Naive thymus-derived CD8-positive, alpha-beta T cell (primary cell): ENCODE measurements at regions of chr1 and their contacts with region 1.

Region 1: DNA sequence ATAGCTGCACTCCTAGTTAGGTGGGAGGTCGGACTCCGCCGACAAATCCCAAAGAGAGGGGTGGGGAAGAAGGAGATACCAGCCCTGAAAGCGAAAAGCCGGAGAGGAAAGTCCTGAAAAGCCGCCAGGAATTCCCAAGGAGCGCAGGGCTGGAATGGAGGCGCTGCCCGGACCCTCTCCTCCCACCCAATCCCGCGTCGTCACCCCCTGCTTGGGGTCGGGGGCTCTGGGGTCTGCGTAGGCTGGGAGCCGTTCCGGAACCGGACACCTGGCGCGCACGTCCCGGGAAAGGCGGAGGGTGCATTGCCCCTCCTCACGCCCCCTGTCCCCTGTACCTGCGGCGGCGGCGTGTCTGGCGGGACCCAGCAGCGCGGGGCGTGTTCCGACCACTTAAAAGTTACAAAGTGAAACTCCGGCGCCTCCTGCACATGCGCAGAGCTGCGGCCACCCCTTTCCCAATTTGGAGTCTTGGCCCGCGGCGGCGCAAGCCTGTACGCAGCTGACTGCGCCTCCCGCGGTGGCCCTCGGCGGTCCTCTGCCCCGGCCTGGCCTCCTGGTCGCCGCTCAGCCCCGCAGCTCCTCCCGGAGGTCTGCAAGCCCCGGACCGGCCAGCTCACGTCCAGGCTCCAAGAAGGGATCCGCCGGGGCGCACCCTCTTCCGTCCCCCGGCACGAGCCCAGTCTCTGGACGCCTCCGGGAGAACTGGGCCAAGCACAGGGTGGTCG is at the start of gene TMEM63A:
- DNase-seq: peak; percentile 83 to 95 (median 88)
- ATAC-seq: peak; percentile 71 to 76
- H3K4me3 Mint-ChIP-seq: peak within 1 kb of the TSS; percentile 87 to 99 (median 94)
- H3K27ac Mint-ChIP-seq: peak within 1 kb of the TSS; percentile 87 to 98 (median 94)
- H3K4me1 Mint-ChIP-seq: peaks cover 28 to 55% (median 49%) of the 10 kb centered on the region in 4 donors
- H3K27me3 Mint-ChIP-seq: no peaks in the 10 kb centered on the region
- polyA plus RNA-seq, gene TMEM63A: 34.4 to 53.5 (median 45.1) TPM

Region 2: DNA sequence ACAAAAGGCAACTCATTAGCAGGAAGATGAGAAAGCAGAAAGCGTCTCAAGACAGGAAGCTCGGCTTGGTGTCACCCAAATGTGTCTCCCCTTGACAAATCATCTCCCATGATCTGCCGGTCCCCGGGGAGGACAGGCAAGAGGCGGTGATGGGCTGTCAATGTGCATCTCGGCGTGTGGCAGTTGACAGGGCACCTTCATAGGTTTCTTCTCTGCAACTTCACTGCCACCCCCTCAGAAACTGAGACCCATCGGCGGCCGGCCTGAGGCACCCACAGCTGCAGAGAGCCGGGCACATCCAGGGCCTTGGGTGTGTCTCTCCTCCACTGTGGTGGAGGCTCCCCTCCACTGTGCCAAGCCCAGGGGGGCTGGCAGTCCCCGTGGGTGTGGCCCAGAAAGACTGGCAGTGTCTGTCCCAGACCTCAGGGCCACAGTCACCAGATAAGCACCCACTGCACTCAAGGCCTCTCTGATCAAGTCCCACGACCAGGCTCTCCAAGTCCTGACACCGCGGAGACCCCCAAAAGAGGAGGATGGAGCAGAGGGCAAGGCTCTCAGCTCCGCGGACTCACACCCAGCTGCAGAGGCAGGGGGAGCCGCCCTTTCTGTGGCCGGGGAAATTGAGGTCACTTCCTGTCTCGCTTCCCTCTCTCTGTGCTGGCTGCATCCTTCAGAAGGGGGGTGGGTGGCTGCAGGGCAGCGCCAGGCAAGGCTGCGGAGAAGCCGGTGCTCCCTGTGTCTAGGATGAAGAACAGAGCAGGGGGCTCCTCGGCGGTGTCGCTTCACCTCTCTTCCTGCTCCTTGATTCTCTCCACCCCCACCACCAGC is 414.7 kb before region 1 on chr1:
- POLR2A ChIA-PET with region 1: interaction called, 23 read pairs
- DNase-seq: peak; percentile 58 to 90 (median 82)
- ATAC-seq: peak; percentile 85 to 86
- H3K4me3 Mint-ChIP-seq: peak overlapping the region; percentile 89 to 97 (median 92)
- H3K27ac Mint-ChIP-seq: peak overlapping the region; percentile 92 to 99 (median 98)
- H3K4me1 Mint-ChIP-seq: peaks cover 19 to 56% (median 50%) of the 10 kb centered on the region in 4 donors
- H3K27me3 Mint-ChIP-seq: no peaks in the 10 kb centered on the region

Region 3: GRCh38 chr1:225766967-225767633 is 115.0 kb before region 1 on chr1:
- POLR2A ChIA-PET with region 1: no interaction called
- DNase-seq: no peak
- ATAC-seq: no peak
- H3K4me3 Mint-ChIP-seq: no peak overlapping the region
- H3K27ac Mint-ChIP-seq: peak overlapping the region in 2 of 10 donors; percentile 14 to 72
- H3K4me1 Mint-ChIP-seq: peaks cover 0 to 8% (median 5%) of the 10 kb centered on the region in 4 donors
- H3K27me3 Mint-ChIP-seq: peaks cover 0 to 2% (median 0%) of the 10 kb centered on the region in 5 donors

Region 4: GRCh38 chr1:225819346-225820192 is 62.6 kb before region 1 on chr1:
- POLR2A ChIA-PET with region 1: no interaction called
- DNase-seq: no peak
- ATAC-seq: no peak
- H3K4me3 Mint-ChIP-seq: no peak overlapping the region
- H3K27ac Mint-ChIP-seq: peak overlapping the region in 1 of 10 donors; percentile 49
- H3K4me1 Mint-ChIP-seq: no peaks in the 10 kb centered on the region
- H3K27me3 Mint-ChIP-seq: no peaks in the 10 kb centered on the region

Region 5: DNA sequence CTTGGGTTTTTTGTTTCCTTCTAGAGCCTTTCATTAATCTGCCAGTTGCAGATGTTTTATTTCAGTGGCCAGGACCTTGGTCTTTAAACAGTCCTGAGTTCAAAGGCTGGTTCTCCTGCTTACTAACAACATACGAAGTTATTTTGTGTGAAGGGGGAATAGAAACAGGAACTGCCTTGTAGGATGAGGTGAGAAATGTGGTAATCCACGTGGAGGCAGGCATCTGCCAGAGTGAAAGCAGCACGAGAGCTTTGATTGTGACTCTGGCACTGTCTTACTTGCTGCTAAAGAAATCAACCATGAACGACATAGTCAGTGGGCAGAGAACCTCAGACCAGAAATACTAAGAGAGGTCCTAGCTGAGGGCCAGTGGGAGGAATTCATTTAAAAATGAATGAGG is 30.3 kb before region 1 on chr1:
- POLR2A ChIA-PET with region 1: interaction called, 52 read pairs
- DNase-seq: peak in 3 of 10 donors; percentile 34 to 60 (median 41)
- ATAC-seq: peak in 1 of 2 donors; percentile 38
- H3K4me3 Mint-ChIP-seq: peak overlapping the region in 9 of 10 donors; percentile 3 to 78 (median 43)
- H3K27ac Mint-ChIP-seq: peak overlapping the region; percentile 87 to 99 (median 92)
- H3K4me1 Mint-ChIP-seq: peaks cover 38 to 81% (median 74%) of the 10 kb centered on the region in 4 donors
- H3K27me3 Mint-ChIP-seq: no peaks in the 10 kb centered on the region

Region 6: DNA sequence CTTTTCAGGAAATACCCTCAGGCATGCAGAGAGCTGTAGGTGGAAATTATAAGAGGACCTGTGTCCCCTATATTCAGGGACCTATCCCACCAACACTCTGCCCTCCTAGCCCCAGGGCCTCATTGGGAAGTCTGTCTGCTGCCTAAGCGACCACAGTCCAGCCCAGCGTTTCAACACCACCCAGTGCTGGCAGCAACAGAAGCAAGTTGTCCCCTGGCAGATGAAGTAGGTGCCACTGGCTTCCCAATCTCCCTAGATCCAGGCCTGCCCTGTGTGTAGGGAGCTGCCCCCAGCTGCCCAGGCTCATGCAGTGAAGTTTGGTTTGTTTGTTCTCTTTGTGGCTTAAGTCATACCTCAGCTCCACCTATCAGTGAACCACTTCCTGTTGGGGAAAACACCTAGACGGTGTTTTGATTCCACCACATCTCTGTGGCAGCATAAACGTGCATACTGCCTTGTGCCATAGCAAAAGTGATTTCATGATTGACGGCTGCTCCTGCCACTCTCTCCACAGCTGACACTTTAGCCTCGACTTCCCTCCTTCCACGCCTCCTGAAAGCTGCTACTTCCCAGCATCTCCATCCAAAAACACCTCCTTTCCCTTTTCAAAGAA is 14.9 kb after region 1 on chr1:
- POLR2A ChIA-PET with region 1: interaction called, 526 read pairs
- DNase-seq: peak; percentile 21 to 92 (median 80)
- ATAC-seq: peak; percentile 88 to 92
- H3K4me3 Mint-ChIP-seq: peak overlapping the region; percentile 59 to 89 (median 82)
- H3K27ac Mint-ChIP-seq: peak overlapping the region; percentile 94 to 100 (median 97)
- H3K4me1 Mint-ChIP-seq: peaks cover 27 to 64% (median 60%) of the 10 kb centered on the region in 4 donors
- H3K27me3 Mint-ChIP-seq: no peaks in the 10 kb centered on the region

Region 7: GRCh38 chr1:225923692-225924555 is 41.8 kb after region 1 on chr1 and contains the start of gene PYCR2:
- POLR2A ChIA-PET with region 1: interaction called, 94 read pairs
- DNase-seq: peak; percentile 89 to 95 (median 94)
- ATAC-seq: peak; percentile 95 to 96
- H3K4me3 Mint-ChIP-seq: peak within 1 kb of the TSS; percentile 92 to 98 (median 96)
- H3K27ac Mint-ChIP-seq: peak within 1 kb of the TSS; percentile 91 to 98 (median 96)
- H3K4me1 Mint-ChIP-seq: peaks cover 31 to 72% (median 66%) of the 10 kb centered on the region in 4 donors
- H3K27me3 Mint-ChIP-seq: no peaks in the 10 kb centered on the region
- polyA plus RNA-seq, gene PYCR2: 75.0 to 152 (median 121) TPM